ENCODE measurements at regions of chr2 and their contacts with region 1.

Region 1: GRCh38 chr2:29747786-29748494 is 173.4 kb downstream of the ALK start:
- DNase-seq: peak; percentile 100
- ATAC-seq: peak; percentile 89
- H3K4me3 ChIP-seq: peak overlapping the region; percentile 3; the same call in 1 of the 2 replicates
- H3K27ac ChIP-seq: peak overlapping the region; percentile 93
- H3K4me1 ChIP-seq: peaks cover 48% of the 10 kb centered on the region
- H3K27me3 ChIP-seq: no peaks in the 10 kb centered on the region
- CTCF ChIP-seq: no peak

Region 2: DNA sequence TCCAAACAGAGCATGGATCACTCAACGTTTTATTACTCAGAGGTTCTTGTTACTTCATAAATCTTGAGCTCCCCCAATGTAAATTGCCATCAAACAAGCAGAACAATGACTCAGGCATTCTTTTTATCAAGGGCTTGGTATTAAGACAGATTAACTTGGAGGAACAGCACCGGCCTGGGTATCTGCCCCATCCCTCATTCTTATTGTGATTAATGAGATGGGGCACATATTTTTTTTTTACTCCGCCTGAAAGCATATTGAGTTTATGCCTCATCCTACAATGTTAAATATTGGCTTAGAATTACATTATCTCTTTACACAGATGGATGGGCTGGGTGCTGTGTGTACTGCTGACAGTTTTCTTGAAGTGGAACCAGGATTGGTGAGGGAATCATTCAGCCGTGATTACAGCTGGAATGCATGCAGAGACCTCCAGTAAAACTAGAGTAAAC is 245.5 kb before region 1 on chr2:
- CTCF ChIA-PET with region 1: no interaction called
- POLR2A ChIA-PET with region 1: no interaction called
- intact Hi-C with region 1: loop called (anchors 10 kb)
- DNase-seq: peak; percentile 89
- ATAC-seq: peak; percentile 90
- H3K4me3 ChIP-seq: no peak overlapping the region
- H3K27ac ChIP-seq: peak overlapping the region; percentile 25
- H3K4me1 ChIP-seq: peaks cover 32% of the 10 kb centered on the region
- H3K27me3 ChIP-seq: no peaks in the 10 kb centered on the region
- CTCF ChIP-seq: no peak

Region 3: DNA sequence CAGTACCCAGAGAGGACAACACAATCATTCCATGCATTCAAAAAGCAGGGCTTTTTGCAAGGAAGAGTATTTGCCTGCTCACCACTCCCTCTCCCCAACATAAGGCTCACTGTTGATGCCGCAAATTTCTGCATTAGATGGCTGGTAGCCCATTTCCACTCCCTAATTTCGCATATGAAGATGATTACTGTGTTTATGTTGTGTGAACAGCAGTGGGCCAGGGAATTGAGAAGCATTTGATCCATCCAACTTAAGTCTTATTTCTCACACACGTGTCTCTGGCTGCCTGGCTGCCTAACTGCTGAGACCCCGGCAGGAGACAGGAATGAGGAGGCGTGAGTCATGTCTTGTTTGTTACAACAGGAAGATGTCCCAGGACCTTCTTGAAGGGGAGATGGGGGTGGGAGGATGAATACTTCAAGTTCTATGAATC is 120.6 kb before region 1 on chr2:
- CTCF ChIA-PET with region 1: interaction called, 3 read pairs
- POLR2A ChIA-PET with region 1: no interaction called
- intact Hi-C with region 1: loop called (anchors 1 kb)
- DNase-seq: peak; percentile 80
- ATAC-seq: peak; percentile 54
- H3K4me3 ChIP-seq: peak overlapping the region; percentile 59
- H3K27ac ChIP-seq: peak overlapping the region; percentile 99
- H3K4me1 ChIP-seq: peaks cover 54% of the 10 kb centered on the region
- H3K27me3 ChIP-seq: no peaks in the 10 kb centered on the region
- CTCF ChIP-seq: no peak

Region 4: GRCh38 chr2:29723255-29724001 is 24.5 kb before region 1 on chr2:
- CTCF ChIA-PET with region 1: no interaction called
- POLR2A ChIA-PET with region 1: no interaction called
- intact Hi-C with region 1: loop called (anchors 1 kb)
- DNase-seq: peak; percentile 89
- ATAC-seq: peak; percentile 98
- H3K4me3 ChIP-seq: no peak overlapping the region
- H3K27ac ChIP-seq: peak overlapping the region; percentile 80
- H3K4me1 ChIP-seq: peaks cover 18% of the 10 kb centered on the region
- H3K27me3 ChIP-seq: no peaks in the 10 kb centered on the region
- CTCF ChIP-seq: no peak